Caco-2 (cell line): ENCODE measurements at regions of chr1 and their contacts with region 1.

Region 1: DNA sequence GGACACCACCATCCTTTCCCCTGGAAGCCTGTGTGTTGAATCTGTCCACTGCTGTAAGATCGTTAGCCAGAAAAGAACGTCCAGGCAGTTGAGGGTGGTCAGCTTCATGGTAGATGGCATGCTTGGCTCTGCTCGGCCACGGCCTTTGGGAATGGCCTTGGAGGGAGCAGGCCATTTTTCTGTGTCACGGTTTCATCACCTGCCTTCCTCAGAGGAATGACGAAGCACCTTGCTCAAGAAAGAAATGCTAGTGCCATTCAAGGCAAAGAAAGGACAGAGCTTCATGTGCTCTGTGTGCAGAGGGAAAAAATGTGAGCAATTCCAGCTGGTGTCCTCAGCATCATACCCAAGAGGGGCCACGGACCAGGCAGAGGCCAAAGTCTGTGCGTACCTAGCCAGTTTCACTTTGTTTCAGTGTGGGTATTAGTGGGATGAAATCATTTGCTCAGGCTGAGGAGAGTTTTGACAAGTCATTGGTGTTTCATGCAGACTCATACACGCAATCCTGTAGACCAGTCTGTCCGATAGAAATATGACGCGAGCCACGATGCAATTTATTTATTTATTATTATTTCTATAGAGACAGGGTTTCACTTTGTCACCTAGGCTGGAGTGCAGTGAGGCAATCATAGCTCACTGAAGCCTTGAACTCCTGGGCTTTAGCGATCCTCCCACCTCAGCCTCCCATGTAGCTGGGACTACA is 64.0 kb downstream of the IRF2BP2 start:
- DNase-seq: peak; percentile 88 to 90
- H3K4me3 ChIP-seq: no peak overlapping the region
- H3K4me3 Mint-ChIP-seq: no peak overlapping the region
- H3K27ac Mint-ChIP-seq: peak overlapping the region; percentile 48
- H3K4me1 ChIP-seq: peaks cover 39% of the 10 kb centered on the region
- H3K4me1 Mint-ChIP-seq: peaks cover 32% of the 10 kb centered on the region
- H3K27me3 ChIP-seq: no peaks in the 10 kb centered on the region
- H3K27me3 Mint-ChIP-seq: no peaks in the 10 kb centered on the region
- CTCF ChIP-seq: no peak

Region 2: DNA sequence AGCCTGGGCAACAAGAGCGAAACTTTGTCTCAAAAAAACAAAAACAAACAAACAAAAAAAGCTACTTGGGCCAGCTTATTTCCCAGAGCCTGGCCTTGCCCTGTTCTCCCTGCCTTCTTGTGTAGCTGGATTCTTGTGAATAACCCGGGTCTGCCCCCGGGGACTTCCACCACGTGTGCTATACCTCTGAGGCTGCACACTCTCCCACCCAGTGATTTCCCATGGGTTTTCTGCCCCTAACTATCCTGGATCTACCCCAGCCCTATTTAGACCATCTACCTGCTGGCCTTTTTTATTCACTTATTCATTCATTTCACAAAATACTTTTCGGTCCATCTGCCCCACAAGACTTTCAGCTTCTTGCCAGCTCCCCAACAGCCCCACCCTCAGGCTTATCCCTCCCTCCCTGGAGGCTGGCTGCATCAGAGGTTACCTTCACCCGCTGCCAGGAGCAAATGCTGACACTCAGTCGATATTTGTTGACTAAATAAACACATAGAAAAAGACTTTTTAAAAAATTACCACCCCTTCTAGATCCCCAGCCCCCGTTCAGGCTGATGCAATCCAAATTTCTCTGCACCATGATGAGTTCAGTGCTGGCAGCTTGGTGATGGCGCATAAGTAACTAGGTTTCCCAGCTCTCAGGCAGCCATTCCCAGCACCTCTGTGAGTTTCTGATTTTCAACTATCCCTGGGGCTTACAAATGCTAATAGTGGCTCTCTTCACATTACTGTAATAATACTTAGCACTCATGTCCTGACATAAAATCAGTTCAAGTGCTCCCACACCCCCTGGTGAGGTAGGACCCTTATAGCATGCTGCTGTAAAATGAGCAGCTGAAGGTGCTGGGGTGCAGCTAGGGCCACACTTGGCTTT is 36.3 kb before region 1 on chr1:
- CTCF ChIA-PET with region 1: no interaction called
- POLR2A ChIA-PET with region 1: no interaction called
- intact Hi-C with region 1: loop called (anchors 2 kb)
- DNase-seq: no peak
- H3K4me3 ChIP-seq: no peak overlapping the region
- H3K4me3 Mint-ChIP-seq: no peak overlapping the region
- H3K27ac Mint-ChIP-seq: peak overlapping the region; percentile 60
- H3K4me1 ChIP-seq: peaks cover 23% of the 10 kb centered on the region
- H3K4me1 Mint-ChIP-seq: peaks cover 22% of the 10 kb centered on the region
- H3K27me3 ChIP-seq: no peaks in the 10 kb centered on the region
- H3K27me3 Mint-ChIP-seq: no peaks in the 10 kb centered on the region
- CTCF ChIP-seq: no peak

Region 3: DNA sequence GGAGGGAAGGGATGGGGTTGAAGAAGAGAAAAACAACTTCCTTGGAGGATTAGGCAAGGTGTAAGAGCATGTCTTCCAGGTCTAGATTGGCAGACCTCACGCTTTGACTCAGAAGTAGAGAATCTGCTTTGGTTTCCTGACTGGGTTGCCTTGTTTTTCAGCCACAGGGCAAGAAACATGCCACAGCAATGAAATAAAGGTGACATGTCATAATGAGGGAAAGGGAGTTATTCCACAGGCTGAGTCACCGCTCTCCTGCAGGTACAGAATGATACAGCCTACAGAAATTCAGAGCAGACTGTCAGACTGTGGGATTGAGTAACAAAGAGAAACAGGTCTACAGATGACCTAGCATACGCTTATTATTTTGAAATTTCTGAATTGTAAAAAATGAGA is 18.6 kb after region 1 on chr1:
- CTCF ChIA-PET with region 1: interaction called, 3 read pairs
- POLR2A ChIA-PET with region 1: interaction called, 3 read pairs
- intact Hi-C with region 1: loop called (anchors 1 kb)
- DNase-seq: peak; percentile 49
- H3K4me3 ChIP-seq: no peak overlapping the region
- H3K4me3 Mint-ChIP-seq: no peak overlapping the region
- H3K27ac Mint-ChIP-seq: peak overlapping the region; percentile 15
- H3K4me1 ChIP-seq: peaks cover 42% of the 10 kb centered on the region
- H3K4me1 Mint-ChIP-seq: peaks cover 24% of the 10 kb centered on the region
- H3K27me3 ChIP-seq: no peaks in the 10 kb centered on the region
- H3K27me3 Mint-ChIP-seq: no peaks in the 10 kb centered on the region
- CTCF ChIP-seq: no peak

Region 4: GRCh38 chr1:234617131-234617985 is 71.3 kb after region 1 on chr1:
- CTCF ChIA-PET with region 1: no interaction called
- POLR2A ChIA-PET with region 1: no interaction called
- intact Hi-C with region 1: no loop called
- DNase-seq: no peak
- H3K4me3 ChIP-seq: no peak overlapping the region
- H3K4me3 Mint-ChIP-seq: peak overlapping the region; percentile 13
- H3K27ac Mint-ChIP-seq: peak overlapping the region; percentile 51
- H3K4me1 ChIP-seq: peaks cover 76% of the 10 kb centered on the region
- H3K4me1 Mint-ChIP-seq: peaks cover 63% of the 10 kb centered on the region
- H3K27me3 ChIP-seq: no peaks in the 10 kb centered on the region
- H3K27me3 Mint-ChIP-seq: no peaks in the 10 kb centered on the region
- CTCF ChIP-seq: peak in 1 of 2 experiments; percentile 36